CD8-positive, alpha-beta T cell (primary cell): ENCODE measurements at regions of chrX and their contacts with region 1.

Region 1: GRCh38 chrX:75156021-75156945 is at the start of gene ABCB7:
- DNase-seq: peak; percentile 19 to 83 (median 63)
- ATAC-seq: peak; percentile 91
- H3K4me3 ChIP-seq: peak within 1 kb of the TSS; percentile 87 to 96
- H3K4me3 Mint-ChIP-seq: peak within 1 kb of the TSS; percentile 94
- H3K27ac ChIP-seq: peak within 1 kb of the TSS; percentile 77 to 80
- H3K27ac Mint-ChIP-seq: peak within 1 kb of the TSS; percentile 98
- H3K4me1 ChIP-seq: peaks cover 17% of the 10 kb centered on the region
- H3K4me1 Mint-ChIP-seq: peaks cover 49% of the 10 kb centered on the region
- H3K27me3 ChIP-seq: no peaks in the 10 kb centered on the region
- H3K27me3 Mint-ChIP-seq: no peaks in the 10 kb centered on the region
- CTCF ChIP-seq: no peak
- total RNA-seq, gene ABCB7: 16.6 to 17.3 TPM

Region 2: DNA sequence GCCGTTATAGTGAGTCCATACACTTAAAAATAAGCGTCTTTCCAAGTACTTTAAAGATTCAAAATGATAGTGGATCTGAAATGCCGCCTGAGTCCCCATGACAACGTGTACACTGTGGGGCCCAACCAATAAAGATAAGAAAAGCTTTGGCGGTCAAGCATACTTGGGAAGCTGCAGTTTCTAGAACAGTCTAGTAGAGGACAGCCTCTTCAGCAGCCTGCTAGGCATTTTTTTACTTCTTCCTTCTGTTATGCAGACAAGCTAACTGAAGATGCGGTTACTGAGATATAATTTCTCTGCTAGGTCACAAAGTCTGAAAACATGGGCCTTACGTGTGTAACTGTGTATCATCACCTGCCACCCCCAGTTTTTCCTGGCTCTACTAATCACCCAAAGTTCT is 117.2 kb after region 1 on chrX:
- CTCF ChIA-PET with region 1: no interaction called
- POLR2A ChIA-PET with region 1: interaction called, 3 read pairs
- intact Hi-C with region 1: loop called (anchors 1 to 2 kb)
- DNase-seq: peak in 1 of 9 experiments; percentile 5
- ATAC-seq: peak; percentile 43
- H3K4me3 ChIP-seq: peak overlapping the region; percentile 75 to 88
- H3K4me3 Mint-ChIP-seq: peak overlapping the region; percentile 92
- H3K27ac ChIP-seq: peak overlapping the region; percentile 89 to 90
- H3K27ac Mint-ChIP-seq: peak overlapping the region; percentile 96
- H3K4me1 ChIP-seq: peaks cover 18% of the 10 kb centered on the region
- H3K4me1 Mint-ChIP-seq: peaks cover 44% of the 10 kb centered on the region
- H3K27me3 ChIP-seq: no peaks in the 10 kb centered on the region
- H3K27me3 Mint-ChIP-seq: no peaks in the 10 kb centered on the region
- CTCF ChIP-seq: no peak